ENCODE measurements at regions of chrX and their contacts with region 1.

Region 1: DNA sequence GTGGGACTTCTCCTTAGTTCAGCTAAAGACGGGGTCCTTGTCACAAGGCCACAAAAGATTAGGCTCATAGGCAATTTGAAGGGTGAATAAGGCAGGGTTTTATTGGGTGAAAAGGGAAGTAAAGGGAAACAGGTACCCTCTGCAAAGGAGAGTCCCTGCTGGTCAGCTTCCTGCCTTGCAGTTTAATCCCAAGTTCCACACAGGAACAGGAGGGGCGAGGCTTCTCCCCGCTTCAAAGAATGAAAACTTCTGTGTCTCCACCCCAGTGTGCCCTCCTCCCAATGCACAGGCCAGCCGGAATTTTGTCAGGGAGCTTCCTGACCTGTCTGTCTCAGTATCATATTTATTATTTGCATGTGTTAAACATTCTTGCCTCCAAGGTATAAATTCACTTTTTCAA is 37.1 kb downstream of the ITM2A start:
- DNase-seq: no peak
- ATAC-seq: no peak
- H3K4me3 Mint-ChIP-seq: no peak overlapping the region
- H3K27ac Mint-ChIP-seq: no peak overlapping the region
- H3K4me1 Mint-ChIP-seq: peaks cover 3% of the 10 kb centered on the region
- H3K27me3 Mint-ChIP-seq: no peaks in the 10 kb centered on the region

Region 2: DNA sequence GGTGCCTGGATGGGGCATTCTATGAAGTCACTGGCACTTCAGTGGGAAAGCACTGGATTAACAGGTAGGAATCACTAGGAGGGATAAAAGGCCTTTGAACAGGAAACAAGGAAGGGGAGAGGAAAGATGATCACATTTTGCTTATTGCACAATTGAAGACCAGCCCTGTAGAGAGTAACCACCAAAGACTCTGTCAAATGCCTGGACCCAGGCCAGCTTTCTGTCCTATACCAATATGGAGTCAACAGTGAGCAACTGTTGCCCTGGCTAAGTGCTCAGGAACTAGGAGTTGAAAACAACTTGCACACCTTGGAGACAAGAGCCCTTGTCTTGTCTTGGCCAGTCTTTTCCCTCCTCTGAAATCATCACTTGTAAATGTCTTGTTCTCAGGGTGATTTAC is 656.8 kb before region 1 on chrX:
- CTCF ChIA-PET with region 1: no interaction called
- POLR2A ChIA-PET with region 1: no interaction called
- intact Hi-C with region 1: no loop called
- DNase-seq: no peak
- ATAC-seq: no peak
- H3K4me3 Mint-ChIP-seq: no peak overlapping the region
- H3K27ac Mint-ChIP-seq: no peak overlapping the region
- H3K4me1 Mint-ChIP-seq: no peaks in the 10 kb centered on the region
- H3K27me3 Mint-ChIP-seq: no peaks in the 10 kb centered on the region

Region 3: DNA sequence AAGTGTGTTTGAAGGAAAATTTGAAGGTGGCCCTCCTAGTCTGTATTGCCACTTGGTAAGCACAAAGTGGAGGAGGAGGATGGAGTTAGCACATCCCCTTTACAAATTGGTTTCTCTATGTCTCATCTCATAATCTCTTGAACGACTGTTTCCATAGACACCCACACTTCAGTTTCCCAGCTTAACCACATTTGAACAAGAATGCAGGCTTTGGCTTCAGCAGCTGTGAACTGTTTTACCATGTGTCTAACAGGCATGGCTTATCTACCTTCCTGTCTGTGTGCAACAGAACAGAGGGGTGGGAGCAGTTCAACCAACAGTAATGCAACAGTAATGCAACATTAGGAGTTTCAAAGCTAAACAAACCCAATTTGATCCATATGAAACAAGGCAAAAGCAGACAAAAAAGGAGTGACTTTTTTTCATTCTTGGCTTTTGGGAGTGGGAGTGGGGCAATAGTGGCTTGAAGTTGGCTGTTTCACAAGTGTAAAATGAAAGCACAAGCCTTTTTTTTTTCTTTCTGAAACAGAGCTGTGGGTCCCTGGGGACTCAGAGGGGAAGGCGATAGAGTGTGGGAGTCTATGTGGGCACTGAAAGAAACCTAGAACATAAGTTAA is 70.8 kb before region 1 on chrX:
- CTCF ChIA-PET with region 1: no interaction called
- POLR2A ChIA-PET with region 1: no interaction called
- intact Hi-C with region 1: no loop called
- DNase-seq: peak; percentile 61
- ATAC-seq: peak; percentile 84
- H3K4me3 Mint-ChIP-seq: peak overlapping the region; percentile 52
- H3K27ac Mint-ChIP-seq: peak overlapping the region; percentile 90
- H3K4me1 Mint-ChIP-seq: peaks cover 78% of the 10 kb centered on the region
- H3K27me3 Mint-ChIP-seq: no peaks in the 10 kb centered on the region

Region 4: DNA sequence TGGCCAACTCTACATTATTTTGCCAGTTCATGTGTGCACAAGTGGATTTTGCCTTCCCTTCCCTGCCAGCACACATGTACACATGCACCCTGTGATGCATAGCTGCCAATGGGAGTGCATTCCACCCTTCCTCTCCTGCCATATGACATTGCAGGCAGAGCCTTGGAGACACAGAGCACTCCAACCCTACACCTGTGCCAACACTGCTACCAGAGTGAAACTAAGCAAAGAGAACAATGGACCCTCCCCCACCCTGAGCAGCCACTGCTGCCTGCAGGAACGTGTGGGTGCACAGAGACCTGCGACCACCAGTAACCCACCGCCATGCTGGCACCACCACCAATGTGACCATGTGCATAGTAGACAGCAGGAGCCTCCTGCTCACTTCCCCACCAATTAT is 41.3 kb before region 1 on chrX:
- CTCF ChIA-PET with region 1: no interaction called
- POLR2A ChIA-PET with region 1: no interaction called
- intact Hi-C with region 1: loop called in 1 of 2 experiments (anchors 5 kb)
- DNase-seq: no peak
- ATAC-seq: no peak
- H3K4me3 Mint-ChIP-seq: no peak overlapping the region
- H3K27ac Mint-ChIP-seq: peak overlapping the region; percentile 37
- H3K4me1 Mint-ChIP-seq: peaks cover 44% of the 10 kb centered on the region
- H3K27me3 Mint-ChIP-seq: no peaks in the 10 kb centered on the region

Region 5: DNA sequence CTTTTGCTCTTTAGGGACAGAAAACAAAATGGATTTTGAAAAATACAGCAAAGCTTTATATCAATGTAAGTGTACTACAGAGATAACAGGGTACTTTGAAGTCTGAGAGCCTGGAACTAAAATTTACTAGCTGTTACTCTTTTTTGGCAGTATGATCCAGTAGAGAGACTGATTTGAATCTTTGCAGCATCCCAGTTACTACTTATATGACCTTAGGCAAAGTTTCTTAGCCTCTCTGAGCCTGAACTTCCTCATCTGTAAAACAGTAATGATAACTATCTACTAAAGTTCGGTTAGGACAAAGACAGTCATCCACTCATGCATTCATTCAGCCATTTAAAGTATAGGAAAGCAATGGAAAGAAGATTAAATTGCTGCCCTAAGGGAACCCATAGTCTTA is 1469.6 kb after region 1 on chrX:
- CTCF ChIA-PET with region 1: no interaction called
- POLR2A ChIA-PET with region 1: no interaction called
- intact Hi-C with region 1: no loop called
- DNase-seq: no peak
- ATAC-seq: no peak
- H3K4me3 Mint-ChIP-seq: no peak overlapping the region
- H3K27ac Mint-ChIP-seq: no peak overlapping the region
- H3K4me1 Mint-ChIP-seq: peaks cover 10% of the 10 kb centered on the region
- H3K27me3 Mint-ChIP-seq: no peaks in the 10 kb centered on the region